Right ventricle myocardium inferior (tissue), 1 donor: ENCODE measurements at regions of chr14 and their contacts with region 1.

Region 1: DNA sequence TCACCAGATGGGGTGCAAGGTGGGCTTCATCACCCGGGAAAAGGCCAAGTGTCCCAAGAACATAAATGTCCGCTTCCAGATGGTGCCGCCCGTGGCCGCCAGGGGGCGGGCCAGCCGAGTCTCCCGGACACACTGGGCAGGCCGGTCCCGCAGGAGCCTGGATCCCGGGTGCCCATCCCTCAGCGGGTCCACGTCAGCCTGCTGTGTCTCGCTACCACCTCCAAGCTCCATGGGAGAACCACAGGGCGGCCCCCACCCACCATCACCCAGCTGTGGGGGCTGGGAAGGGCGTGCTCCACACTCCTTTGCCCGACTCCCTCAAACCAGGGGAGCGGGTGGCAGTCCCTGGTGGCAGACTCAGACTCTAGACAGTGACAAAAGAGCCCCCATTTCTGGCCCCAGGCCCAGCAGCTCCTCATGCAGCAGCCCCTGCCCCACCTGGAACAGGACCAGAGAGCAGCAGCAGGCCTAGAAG is 22.0 kb upstream of the NUDT14 start:
- DNase-seq: peak; percentile 89
- ATAC-seq: peak; percentile 35

Region 2: GRCh38 chr14:105255021-105255507 is 52.0 kb after region 1 on chr14:
- intact Hi-C with region 1: loop called (anchors 10 kb)
- DNase-seq: no peak
- ATAC-seq: peak; percentile 77

Region 3: GRCh38 chr14:105281371-105282097 is 78.4 kb after region 1 on chr14:
- intact Hi-C with region 1: loop called (anchors 2 kb)
- DNase-seq: peak; percentile 37
- ATAC-seq: no peak

Region 4: DNA sequence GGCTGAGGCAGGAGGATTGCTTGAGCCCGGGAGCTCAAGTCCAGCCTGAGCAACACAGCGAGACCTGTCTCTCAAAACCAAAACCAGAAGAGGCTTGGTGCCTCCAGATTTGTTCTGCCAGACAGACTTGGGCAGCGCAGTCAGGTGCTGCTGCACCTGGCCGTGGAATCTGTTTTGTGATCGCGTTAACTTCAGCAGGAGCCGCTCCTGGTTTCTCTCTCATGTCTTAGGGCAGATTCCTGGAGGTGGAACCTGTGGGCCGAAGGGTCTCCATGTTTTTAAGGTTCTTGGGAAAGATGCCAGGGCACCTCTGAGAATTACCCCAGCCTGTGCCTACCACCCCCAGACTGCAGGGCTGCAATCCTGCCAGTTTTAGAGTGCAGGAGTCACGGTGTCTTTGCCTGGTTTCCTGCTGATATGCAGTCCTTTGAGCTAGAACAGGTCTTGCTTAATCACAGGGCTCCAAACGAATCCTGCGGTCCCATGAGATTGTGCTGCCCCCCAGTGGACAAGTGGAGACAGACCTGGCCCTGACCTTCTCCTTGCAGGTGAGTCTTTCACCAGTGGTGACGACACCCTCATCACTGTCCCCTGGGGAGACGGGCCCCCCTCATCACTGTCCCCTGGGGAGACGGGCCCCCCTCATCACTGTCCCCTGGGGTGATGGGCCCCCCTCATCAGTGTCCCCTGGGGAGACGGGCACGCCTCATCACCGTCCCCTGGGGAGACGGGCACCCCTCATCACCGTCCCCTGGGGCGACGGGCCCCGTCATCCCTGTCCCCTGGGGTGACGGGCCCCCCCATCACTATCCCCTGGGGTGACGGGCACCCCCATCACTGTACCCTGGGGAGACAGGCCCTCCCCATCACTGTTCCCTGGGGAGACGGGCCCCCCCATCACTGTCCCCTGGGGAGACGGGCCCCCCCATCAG is 149.1 kb after region 1 on chr14:
- intact Hi-C with region 1: loop called (anchors 1 kb)
- DNase-seq: no peak
- ATAC-seq: peak; percentile 89

Region 5: GRCh38 chr14:105527661-105528581 is 324.8 kb after region 1 on chr14:
- intact Hi-C with region 1: loop called (anchors 2 kb)
- DNase-seq: peak; percentile 89
- ATAC-seq: peak; percentile 81

Region 6: DNA sequence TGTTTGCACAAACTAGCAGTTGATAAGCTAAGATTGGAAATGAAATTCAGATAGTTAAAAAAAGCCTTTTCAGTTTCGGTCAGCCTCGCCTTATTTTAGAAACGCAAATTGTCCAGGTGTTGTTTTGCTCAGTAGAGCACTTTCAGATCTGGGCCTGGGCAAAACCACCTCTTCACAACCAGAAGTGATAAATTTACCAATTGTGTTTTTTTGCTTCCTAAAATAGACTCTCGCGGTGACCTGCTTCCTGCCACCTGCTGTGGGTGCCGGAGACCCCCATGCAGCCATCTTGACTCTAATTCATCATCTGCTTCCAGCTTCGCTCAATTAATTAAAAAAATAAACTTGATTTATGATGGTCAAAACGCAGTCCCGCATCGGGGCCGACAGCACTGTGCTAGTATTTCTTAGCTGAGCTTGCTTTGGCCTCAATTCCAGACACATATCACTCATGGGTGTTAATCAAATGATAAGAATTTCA is 658.9 kb after region 1 on chr14:
- intact Hi-C with region 1: no loop called
- DNase-seq: peak; percentile 18
- ATAC-seq: no peak